ENCODE measurements at regions of chr4 and their contacts with region 1.

Region 1: GRCh38 chr4:1740021-1740545 is 18.8 kb downstream of the TACC3 start:
- DNase-seq: no peak
- H3K4me3 ChIP-seq: no peak overlapping the region
- H3K27ac ChIP-seq: no peak overlapping the region
- H3K4me1 ChIP-seq: no peaks in the 10 kb centered on the region
- H3K27me3 ChIP-seq: no peaks in the 10 kb centered on the region

Region 2: GRCh38 chr4:1008840-1009541 is 731.1 kb before region 1 on chr4:
- in situ Hi-C with region 1: no loop called
- DNase-seq: peak; percentile 39
- H3K4me3 ChIP-seq: peak overlapping the region; percentile 82
- H3K27ac ChIP-seq: no peak overlapping the region
- H3K4me1 ChIP-seq: 0 out of 2 replicates have a peak, but pooled peaks cover 3% of the 10 kb centered on the region
- H3K27me3 ChIP-seq: peaks cover 5% of the 10 kb centered on the region

Region 3: GRCh38 chr4:1809754-1810511 is 69.8 kb after region 1 on chr4:
- in situ Hi-C with region 1: loop called (anchors 5 kb)
- DNase-seq: peak; percentile 71
- H3K4me3 ChIP-seq: no peak overlapping the region
- H3K27ac ChIP-seq: no peak overlapping the region
- H3K4me1 ChIP-seq: no peaks in the 10 kb centered on the region
- H3K27me3 ChIP-seq: no peaks in the 10 kb centered on the region